Activated naive CD4-positive, alpha-beta T cell treated with anti-CD3 and anti-CD28 coated beads, Interleukin-2, amount 10 ng/mL, durations not matched to agents 7 days and 5 days (primary cell): ENCODE measurements at regions of chr17 and their contacts with region 1.

Region 1: GRCh38 chr17:44522883-44523671 is 19.9 kb upstream of the GPATCH8 start:
- DNase-seq: peak; percentile 74
- H3K4me3 Mint-ChIP-seq: no peak overlapping the region
- H3K27ac Mint-ChIP-seq: no peak overlapping the region
- H3K4me1 Mint-ChIP-seq: no peaks in the 10 kb centered on the region
- H3K27me3 Mint-ChIP-seq: peaks cover 42% of the 10 kb centered on the region

Region 2: DNA sequence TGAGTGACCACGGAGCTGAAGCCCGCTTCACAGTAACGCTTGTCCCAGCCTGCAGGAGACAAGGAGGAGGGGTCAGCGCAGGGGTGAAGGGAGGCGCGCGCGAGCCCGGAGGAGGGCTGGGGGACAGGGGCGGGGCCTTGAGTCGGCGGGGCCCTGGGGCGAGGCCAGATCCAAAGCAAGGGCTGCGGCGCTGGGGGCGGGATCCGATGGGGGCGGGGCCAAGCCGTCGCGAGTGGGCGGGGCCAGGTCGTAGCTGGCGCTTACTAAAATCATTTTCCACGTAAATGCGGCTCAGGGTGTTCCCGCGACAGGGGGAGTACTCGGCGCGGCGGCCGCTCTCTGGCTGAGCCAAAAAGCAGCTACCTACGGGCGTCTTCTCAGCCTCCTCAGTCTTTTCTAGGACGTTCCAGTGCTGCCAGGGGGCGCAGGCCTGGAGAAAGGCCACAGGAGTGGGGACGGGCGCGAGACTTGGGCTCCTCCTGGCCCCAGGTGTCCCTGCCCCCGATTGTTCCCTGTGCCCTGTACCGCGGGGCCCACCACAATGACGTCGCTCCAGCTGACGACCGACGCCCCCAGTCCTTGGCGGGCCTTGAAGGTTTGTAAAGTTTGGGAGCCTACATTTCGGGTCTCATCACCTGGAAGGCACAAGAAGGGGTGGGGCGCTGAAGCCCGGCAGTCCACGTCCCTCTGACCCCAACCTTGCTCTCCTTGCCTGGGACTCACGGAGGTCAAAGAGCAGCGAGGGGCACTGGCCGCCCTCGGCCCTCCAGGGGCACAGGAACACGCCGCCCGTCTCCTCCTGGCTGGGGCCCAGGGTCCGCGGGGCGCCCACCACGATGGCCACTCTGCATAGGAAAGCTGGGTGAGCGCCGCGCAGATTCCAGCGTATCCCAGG is 137.5 kb before region 1 on chr17:
- CTCF ChIA-PET with region 1: interaction called, 12 read pairs
- DNase-seq: peak; percentile 91
- H3K4me3 Mint-ChIP-seq: peak overlapping the region; percentile 69
- H3K27ac Mint-ChIP-seq: no peak overlapping the region
- H3K4me1 Mint-ChIP-seq: peaks cover 15% of the 10 kb centered on the region
- H3K27me3 Mint-ChIP-seq: peaks cover 83% of the 10 kb centered on the region

Region 3: GRCh38 chr17:44400226-44400847 is 122.7 kb before region 1 on chr17:
- CTCF ChIA-PET with region 1: interaction called, 32 read pairs
- DNase-seq: no peak
- H3K4me3 Mint-ChIP-seq: no peak overlapping the region
- H3K27ac Mint-ChIP-seq: no peak overlapping the region
- H3K4me1 Mint-ChIP-seq: no peaks in the 10 kb centered on the region
- H3K27me3 Mint-ChIP-seq: no peaks in the 10 kb centered on the region

Region 4: DNA sequence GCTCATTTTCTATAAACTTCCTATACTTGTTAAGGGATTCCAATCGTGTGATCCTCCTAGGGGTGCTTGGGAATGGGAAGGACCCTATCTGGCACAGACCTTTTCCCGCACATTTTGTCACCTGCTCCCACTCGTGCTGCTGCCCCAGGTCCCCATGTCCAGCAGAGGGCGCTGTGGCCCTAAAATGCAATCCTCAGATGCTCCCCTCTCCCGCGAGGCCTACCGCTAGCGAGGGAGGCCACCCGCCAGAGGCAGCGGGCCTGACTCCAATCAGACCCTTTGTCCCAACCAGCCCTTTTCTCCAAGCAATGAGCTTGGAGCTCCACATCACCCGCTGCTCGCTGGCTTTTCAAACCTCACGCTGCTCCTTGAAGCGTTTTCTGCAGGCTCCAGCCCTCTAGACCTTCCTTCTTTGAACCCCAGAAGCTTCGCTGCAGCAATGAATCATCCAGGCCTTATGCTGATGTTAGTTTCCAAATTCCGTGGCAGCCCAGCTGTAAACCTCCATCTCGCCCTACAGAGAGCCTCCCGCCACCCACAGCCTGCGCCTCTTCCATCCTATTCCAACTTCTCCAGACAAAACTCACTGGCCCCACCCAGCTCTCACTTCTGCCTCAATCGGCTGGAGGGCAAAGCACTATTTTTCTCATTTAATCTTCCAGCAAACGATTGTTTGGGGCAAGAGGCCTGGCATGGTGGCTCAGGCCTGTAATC is 10.6 kb after region 1 on chr17:
- CTCF ChIA-PET with region 1: interaction called, 18 read pairs
- DNase-seq: peak; percentile 90
- H3K4me3 Mint-ChIP-seq: no peak overlapping the region
- H3K27ac Mint-ChIP-seq: no peak overlapping the region
- H3K4me1 Mint-ChIP-seq: peaks cover 5% of the 10 kb centered on the region
- H3K27me3 Mint-ChIP-seq: peaks cover 28% of the 10 kb centered on the region